CD8-positive, alpha-beta memory T cell (primary cell): ENCODE measurements at regions of chr6 and their contacts with region 1.

Region 1: DNA sequence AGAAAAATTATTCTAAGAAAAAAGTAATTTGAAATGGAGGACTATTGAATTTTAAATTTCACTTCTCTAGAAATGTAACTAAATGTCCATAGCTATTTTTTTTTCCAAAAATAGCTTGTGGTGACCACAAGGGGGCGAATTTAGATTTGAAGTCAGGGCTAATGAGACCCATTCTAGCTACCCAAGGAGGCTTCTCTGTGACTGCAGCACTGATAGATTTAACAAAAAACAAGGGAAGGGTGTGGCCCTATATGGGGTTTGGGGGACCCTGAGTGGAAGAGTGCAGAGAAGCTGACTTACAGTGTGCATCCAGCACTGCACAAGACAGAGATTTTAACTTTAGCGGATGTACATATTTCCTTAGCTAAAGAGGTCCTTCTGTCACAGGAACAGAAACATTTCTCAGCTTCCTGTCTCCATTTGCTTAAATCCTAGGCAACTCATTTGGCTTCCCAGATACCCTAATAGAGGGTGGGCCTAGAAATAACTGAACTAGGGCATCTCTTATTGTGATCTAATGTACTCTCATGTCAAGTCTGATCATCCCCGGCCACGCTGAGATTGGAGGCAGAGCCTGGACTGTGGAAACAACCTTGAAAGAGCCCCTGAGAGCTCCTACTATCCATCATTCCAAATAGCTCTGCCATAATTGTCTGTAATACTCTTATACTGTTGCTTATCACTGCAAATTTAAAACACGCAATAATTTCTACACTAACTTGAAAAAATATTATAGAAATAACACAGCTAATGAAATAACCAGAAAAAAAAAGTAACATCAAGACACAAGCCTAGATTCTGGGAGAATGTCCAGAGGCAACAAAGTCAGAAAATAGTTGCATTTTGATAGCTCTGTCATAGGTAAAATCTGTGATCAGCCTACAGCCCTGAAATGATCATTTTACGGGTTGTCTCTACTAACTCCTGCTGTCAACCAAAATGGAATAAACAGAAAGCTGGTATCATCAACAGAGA is 93.6 kb downstream of the SNAP91 start:
- DNase-seq: peak in 1 of 5 donors; percentile 7
- H3K4me3 ChIP-seq: no peak overlapping the region
- H3K4me3 Mint-ChIP-seq: no peak overlapping the region
- H3K27ac ChIP-seq: no peak overlapping the region
- H3K27ac Mint-ChIP-seq: no peak overlapping the region
- H3K4me1 ChIP-seq: no peaks in the 10 kb centered on the region
- H3K4me1 Mint-ChIP-seq: no peaks in the 10 kb centered on the region
- H3K27me3 ChIP-seq: no peaks in the 10 kb centered on the region
- H3K27me3 Mint-ChIP-seq: no peaks in the 10 kb centered on the region

Region 2: GRCh38 chr6:85323435-85324040 is 1708.2 kb after region 1 on chr6:
- CTCF ChIA-PET with region 1: interaction called, 10 read pairs
- POLR2A ChIA-PET with region 1: no interaction called
- DNase-seq: peak; percentile 33 to 75 (median 48)
- H3K4me3 ChIP-seq: no peak overlapping the region
- H3K4me3 Mint-ChIP-seq: no peak overlapping the region
- H3K27ac ChIP-seq: no peak overlapping the region
- H3K27ac Mint-ChIP-seq: no peak overlapping the region
- H3K4me1 ChIP-seq: no peaks in the 10 kb centered on the region
- H3K4me1 Mint-ChIP-seq: peaks cover 0 to 3% (median 0%) of the 10 kb centered on the region in 3 donors
- H3K27me3 ChIP-seq: no peaks in the 10 kb centered on the region
- H3K27me3 Mint-ChIP-seq: peaks cover 8 to 34% of the 10 kb centered on the region in 2 donors